Activated CD8-positive, alpha-beta memory T cell treated with anti-CD3 and anti-CD28 coated beads, Interleukin-2, amount 10 ng/mL, durations not matched to agents 7 days and 5 days (primary cell): ENCODE measurements at regions of chr3 and their contacts with region 1.

Region 1: GRCh38 chr3:138594150-138594934 is at the start of gene CEP70:
- DNase-seq: peak; percentile 93
- ATAC-seq: peak; percentile 95
- H3K4me3 Mint-ChIP-seq: peak within 1 kb of the TSS; percentile 88
- H3K27ac Mint-ChIP-seq: peak within 1 kb of the TSS; percentile 86
- H3K4me1 Mint-ChIP-seq: peaks cover 11% of the 10 kb centered on the region
- H3K27me3 Mint-ChIP-seq: no peaks in the 10 kb centered on the region
- total RNA-seq, gene CEP70: 9.8 to 10.5 TPM

Region 2: GRCh38 chr3:138417559-138417982 is 176.8 kb before region 1 on chr3:
- CTCF ChIA-PET with region 1: interaction called, 15 read pairs
- DNase-seq: peak; percentile 74
- ATAC-seq: peak; percentile 82
- H3K4me3 Mint-ChIP-seq: no peak overlapping the region
- H3K27ac Mint-ChIP-seq: no peak overlapping the region
- H3K4me1 Mint-ChIP-seq: peaks cover 4% of the 10 kb centered on the region
- H3K27me3 Mint-ChIP-seq: peaks cover 40% of the 10 kb centered on the region

Region 3: GRCh38 chr3:138578141-138578540 is 16.2 kb before region 1 on chr3:
- CTCF ChIA-PET with region 1: interaction called, 12 read pairs
- DNase-seq: no peak
- ATAC-seq: peak; percentile 16
- H3K4me3 Mint-ChIP-seq: peak overlapping the region; percentile 4
- H3K27ac Mint-ChIP-seq: peak overlapping the region; percentile 78
- H3K4me1 Mint-ChIP-seq: peaks cover 24% of the 10 kb centered on the region
- H3K27me3 Mint-ChIP-seq: no peaks in the 10 kb centered on the region

Region 4: DNA sequence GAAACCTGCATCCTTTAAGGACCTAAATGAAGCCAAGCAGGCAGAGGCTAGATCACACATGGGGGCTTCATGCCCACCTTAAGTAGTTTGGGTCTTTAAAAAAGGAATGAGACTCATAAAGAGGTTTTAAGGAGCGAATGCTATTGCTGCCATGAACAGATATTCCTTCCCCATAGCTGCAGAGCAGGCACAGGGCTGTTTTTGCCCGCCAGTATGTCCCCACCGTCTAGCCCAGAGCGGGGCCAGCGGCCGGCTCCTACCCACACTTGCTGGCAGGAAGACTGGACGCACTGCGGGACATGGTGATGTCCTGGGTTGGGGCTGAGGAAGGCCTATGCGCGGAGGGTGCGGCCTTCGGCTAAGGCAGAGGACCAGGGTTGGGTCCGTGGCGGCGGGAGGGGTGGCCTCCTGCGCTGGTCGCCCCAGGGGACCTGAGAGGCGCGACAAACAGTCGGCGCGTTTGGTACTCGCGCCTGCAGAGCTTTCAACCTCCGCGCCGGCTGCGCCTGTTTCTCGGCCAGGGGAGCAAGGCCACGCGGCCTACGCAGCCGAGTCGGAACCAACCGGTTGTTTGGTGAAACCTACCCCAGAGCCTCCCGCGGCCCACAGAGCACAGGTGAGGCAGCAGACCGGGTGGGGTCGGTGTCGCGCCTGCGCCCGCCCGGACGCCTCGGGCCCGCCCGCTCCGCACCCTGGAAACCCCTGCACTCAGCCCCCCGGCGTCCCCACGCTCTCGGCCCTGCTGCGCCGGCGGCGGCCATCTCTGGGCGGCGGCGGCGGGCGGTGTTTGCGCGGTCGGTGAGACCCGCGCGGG is 14.2 kb after region 1 on chr3 and contains the start of gene FAIM:
- CTCF ChIA-PET with region 1: interaction called, 16 read pairs
- DNase-seq: peak; percentile 74
- ATAC-seq: peak; percentile 84
- H3K4me3 Mint-ChIP-seq: peak within 1 kb of the TSS; percentile 81
- H3K27ac Mint-ChIP-seq: peak within 1 kb of the TSS; percentile 90
- H3K4me1 Mint-ChIP-seq: peaks cover 17% of the 10 kb centered on the region
- H3K27me3 Mint-ChIP-seq: peaks cover 4% of the 10 kb centered on the region
- total RNA-seq, gene FAIM: 2.2 to 4.7 TPM

Region 5: GRCh38 chr3:138694287-138695007 is 100.1 kb after region 1 on chr3:
- CTCF ChIA-PET with region 1: interaction called, 12 read pairs
- DNase-seq: no peak
- ATAC-seq: no peak
- H3K4me3 Mint-ChIP-seq: no peak overlapping the region
- H3K27ac Mint-ChIP-seq: no peak overlapping the region
- H3K4me1 Mint-ChIP-seq: no peaks in the 10 kb centered on the region
- H3K27me3 Mint-ChIP-seq: no peaks in the 10 kb centered on the region